Cardiac septum (tissue), 1 donor: ENCODE measurements at regions of chr12 and their contacts with region 1.

Region 1: DNA sequence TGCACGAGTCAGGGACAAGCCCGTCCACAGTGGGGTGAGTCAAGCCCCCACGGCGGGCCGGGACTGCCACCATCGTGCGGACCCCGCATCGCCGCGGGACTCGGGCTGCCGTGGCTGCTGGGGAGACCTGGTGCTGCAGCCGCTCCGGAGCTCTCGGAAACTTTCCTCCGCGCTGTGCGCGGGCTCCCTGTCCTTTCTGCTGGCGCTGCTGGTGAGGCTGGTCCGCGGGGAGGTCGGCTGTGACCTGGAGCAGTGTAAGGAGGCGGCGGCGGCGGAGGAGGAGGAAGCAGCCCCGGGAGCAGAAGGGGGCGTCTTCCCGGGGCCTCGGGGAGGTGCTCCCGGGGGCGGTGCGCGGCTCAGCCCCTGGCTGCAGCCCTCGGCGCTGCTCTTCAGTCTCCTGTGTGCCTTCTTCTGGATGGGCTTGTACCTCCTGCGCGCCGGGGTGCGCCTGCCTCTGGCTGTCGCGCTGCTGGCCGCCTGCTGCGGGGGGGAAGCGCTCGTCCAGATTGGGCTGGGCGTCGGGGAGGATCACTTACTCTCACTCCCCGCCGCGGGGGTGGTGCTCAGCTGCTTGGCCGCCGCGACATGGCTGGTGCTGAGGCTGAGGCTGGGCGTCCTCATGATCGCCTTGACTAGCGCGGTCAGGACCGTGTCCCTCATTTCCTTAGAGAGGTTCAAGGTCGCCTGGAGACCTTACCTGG is 1.1 kb downstream of the PDE3A start:
- DNase-seq: peak; percentile 88

Region 2: GRCh38 chr12:19757317-19757877 is 612.1 kb before region 1 on chr12:
- intact Hi-C with region 1: loop called (anchors 10 kb)
- DNase-seq: no peak

Region 3: GRCh38 chr12:19994970-19995369 is 374.5 kb before region 1 on chr12:
- intact Hi-C with region 1: loop called (anchors 5 kb)
- DNase-seq: no peak

Region 4: GRCh38 chr12:20278276-20278675 is 91.2 kb before region 1 on chr12:
- intact Hi-C with region 1: loop called (anchors 5 kb)
- DNase-seq: no peak

Region 5: DNA sequence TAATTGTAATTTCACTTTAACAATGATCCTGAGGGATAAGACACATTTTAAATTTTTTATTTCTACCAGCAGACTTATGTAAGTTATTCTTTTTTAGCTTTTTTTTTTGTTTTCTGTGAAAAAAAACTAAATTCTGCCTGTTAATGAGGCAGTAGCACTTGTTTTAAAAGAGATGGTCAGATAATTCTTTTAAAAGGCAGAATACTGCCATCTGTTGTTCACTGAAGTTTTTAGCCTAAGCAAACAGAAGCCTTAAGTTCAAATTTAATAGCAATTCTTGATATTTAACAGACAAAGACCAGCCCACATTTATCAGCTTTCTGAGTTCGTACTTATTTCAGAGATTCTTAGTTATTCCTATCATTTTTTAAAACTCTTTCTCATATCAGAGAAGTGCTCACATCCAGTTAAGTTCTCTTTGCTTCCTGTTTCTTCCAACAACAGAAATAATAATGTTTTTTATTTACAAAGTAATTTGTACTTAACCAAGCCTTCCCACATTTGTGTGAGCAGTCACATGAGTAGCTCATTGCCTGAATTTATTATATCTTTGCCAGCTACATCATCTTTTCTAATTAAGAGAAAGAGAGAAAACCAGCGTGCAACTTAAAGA is 232.3 kb after region 1 on chr12:
- intact Hi-C with region 1: loop called (anchors 5 kb)
- DNase-seq: no peak